IMR-90 (cell line): ENCODE measurements at regions of chr10 and their contacts with region 1.

Region 1: GRCh38 chr10:80444646-80445319 is 9.3 kb upstream of the TSPAN14 start:
- DNase-seq: peak; percentile 74
- ATAC-seq: peak; percentile 97
- H3K4me3 ChIP-seq: no peak overlapping the region
- H3K27ac ChIP-seq: no peak overlapping the region
- H3K4me1 ChIP-seq: no peaks in the 10 kb centered on the region
- H3K27me3 ChIP-seq: no peaks in the 10 kb centered on the region; the same call in 1 of the 2 replicates
- CTCF ChIP-seq: peak; percentile 95
- POLR2A ChIP-seq: no peak
- RAD21 ChIP-seq: peak; percentile 97

Region 2: GRCh38 chr10:80382989-80383388 is 61.8 kb before region 1 on chr10:
- CTCF ChIA-PET with region 1: interaction called, 5 read pairs
- POLR2A ChIA-PET with region 1: no interaction called
- dilution Hi-C with region 1: no loop called
- in situ Hi-C with region 1: no loop called
- intact Hi-C with region 1: loop called (anchors 2 kb)
- DNase-seq: peak; percentile 11
- ATAC-seq: peak; percentile 17; the same call in 1 of the 2 replicates
- H3K4me3 ChIP-seq: no peak overlapping the region
- H3K27ac ChIP-seq: no peak overlapping the region
- H3K4me1 ChIP-seq: no peaks in the 10 kb centered on the region
- H3K27me3 ChIP-seq: 0 out of 2 replicates have a peak, but pooled peaks cover 2% of the 10 kb centered on the region
- CTCF ChIP-seq: peak; percentile 50
- POLR2A ChIP-seq: no peak
- RAD21 ChIP-seq: peak; percentile 49

Region 3: GRCh38 chr10:80600256-80600655 is 155.5 kb after region 1 on chr10:
- CTCF ChIA-PET with region 1: interaction called, 3 read pairs
- POLR2A ChIA-PET with region 1: no interaction called
- dilution Hi-C with region 1: no loop called
- in situ Hi-C with region 1: no loop called
- intact Hi-C with region 1: loop called (anchors 1 kb)
- DNase-seq: no peak
- ATAC-seq: no peak
- H3K4me3 ChIP-seq: no peak overlapping the region
- H3K27ac ChIP-seq: no peak overlapping the region
- H3K4me1 ChIP-seq: no peaks in the 10 kb centered on the region
- H3K27me3 ChIP-seq: no peaks in the 10 kb centered on the region
- CTCF ChIP-seq: no peak
- POLR2A ChIP-seq: no peak
- RAD21 ChIP-seq: no peak

Region 4: GRCh38 chr10:80699602-80700039 is 254.8 kb after region 1 on chr10:
- CTCF ChIA-PET with region 1: interaction called, 3 read pairs
- POLR2A ChIA-PET with region 1: no interaction called
- dilution Hi-C with region 1: no loop called
- in situ Hi-C with region 1: no loop called
- intact Hi-C with region 1: loop called (anchors 2 kb)
- DNase-seq: peak; percentile 50
- ATAC-seq: peak; percentile 98
- H3K4me3 ChIP-seq: no peak overlapping the region
- H3K27ac ChIP-seq: no peak overlapping the region
- H3K4me1 ChIP-seq: no peaks in the 10 kb centered on the region
- H3K27me3 ChIP-seq: no peaks in the 10 kb centered on the region
- CTCF ChIP-seq: peak; percentile 71
- POLR2A ChIP-seq: no peak
- RAD21 ChIP-seq: peak; percentile 62

Region 5: DNA sequence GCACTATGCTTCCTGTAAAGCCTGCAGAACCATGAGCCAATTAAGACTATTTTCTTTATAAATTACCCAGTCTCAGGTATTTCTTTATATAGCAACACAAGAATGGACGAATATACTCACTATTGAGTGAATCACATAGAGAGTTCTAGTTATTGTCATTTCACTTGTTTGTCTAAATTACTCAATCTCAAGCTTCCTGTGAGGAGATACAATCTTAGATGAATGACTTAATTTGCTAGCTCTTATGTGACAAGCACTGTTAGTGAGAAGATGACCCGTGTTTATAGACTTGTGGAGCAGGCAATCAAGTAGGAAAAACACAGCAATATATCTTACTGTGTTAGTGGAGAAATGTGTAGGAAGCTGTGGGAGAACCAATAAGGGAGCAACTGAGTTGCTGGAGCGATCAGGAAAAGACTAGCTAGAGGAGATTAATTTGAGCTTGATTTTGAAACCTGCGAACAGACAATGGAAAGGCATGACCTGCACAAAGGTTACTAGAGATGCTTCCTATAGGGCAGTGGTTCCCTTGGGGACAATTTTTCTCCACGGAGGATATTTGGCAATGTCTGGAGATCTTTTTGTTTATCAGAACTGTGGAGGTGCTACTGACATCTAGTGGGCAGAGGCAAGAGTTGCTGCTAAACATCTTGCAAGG is 574.1 kb after region 1 on chr10:
- CTCF ChIA-PET with region 1: no interaction called
- POLR2A ChIA-PET with region 1: no interaction called
- dilution Hi-C with region 1: no loop called
- in situ Hi-C with region 1: no loop called
- intact Hi-C with region 1: loop called (anchors 2 kb)
- DNase-seq: peak; percentile 19
- ATAC-seq: peak; percentile 72
- H3K4me3 ChIP-seq: no peak overlapping the region
- H3K27ac ChIP-seq: no peak overlapping the region
- H3K4me1 ChIP-seq: no peaks in the 10 kb centered on the region
- H3K27me3 ChIP-seq: no peaks in the 10 kb centered on the region
- CTCF ChIP-seq: peak; percentile 56
- POLR2A ChIP-seq: no peak
- RAD21 ChIP-seq: 0 out of 2 replicates have a peak, but pooled peaks have one; percentile 12